Panc1 (cell line): ENCODE measurements at regions of chr1 and their contacts with region 1.

Region 1: GRCh38 chr1:27220096-27220495 is 14.3 kb upstream of the WDTC1 start:
- DNase-seq: no peak
- ATAC-seq: no peak
- H3K4me3 ChIP-seq: no peak overlapping the region
- H3K27ac ChIP-seq: no peak overlapping the region
- H3K4me1 ChIP-seq: no peaks in the 10 kb centered on the region
- H3K27me3 ChIP-seq: no peaks in the 10 kb centered on the region
- CTCF ChIP-seq: no peak

Region 2: DNA sequence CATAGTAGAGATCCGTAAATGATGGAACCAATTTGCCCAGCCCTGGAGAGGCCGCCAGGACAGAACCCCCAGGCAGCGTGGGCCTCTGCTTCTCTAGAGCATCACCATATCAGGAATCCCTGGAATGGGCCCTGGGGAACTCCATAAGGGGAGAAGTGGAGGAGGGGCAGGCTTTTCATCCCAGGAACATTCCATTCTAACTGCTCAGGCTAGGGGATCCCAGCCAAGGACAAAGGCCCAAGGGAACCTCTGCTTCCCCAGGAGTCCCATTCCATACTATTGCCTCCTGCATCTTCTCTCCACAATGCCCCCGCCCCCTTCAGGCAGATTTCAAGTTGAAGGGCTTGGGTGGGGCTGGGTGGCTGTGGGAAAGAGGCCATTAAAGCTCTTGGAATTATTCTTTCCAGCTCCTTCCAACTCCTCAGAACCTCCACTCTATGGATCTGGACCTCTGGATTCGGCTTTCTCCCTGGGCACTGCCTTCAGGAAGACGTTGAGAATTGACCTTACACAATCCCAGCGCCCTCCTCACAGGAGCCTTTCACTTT is 220.6 kb before region 1 on chr1:
- CTCF ChIA-PET with region 1: interaction called, 10 read pairs
- POLR2A ChIA-PET with region 1: no interaction called
- in situ Hi-C with region 1: no loop called
- intact Hi-C with region 1: no loop called
- DNase-seq: no peak
- ATAC-seq: peak; percentile 59
- H3K4me3 ChIP-seq: no peak overlapping the region
- H3K27ac ChIP-seq: peak overlapping the region; percentile 82
- H3K4me1 ChIP-seq: peaks cover 78% of the 10 kb centered on the region
- H3K27me3 ChIP-seq: no peaks in the 10 kb centered on the region
- CTCF ChIP-seq: no peak

Region 3: GRCh38 chr1:27145934-27146354 is 74.2 kb before region 1 on chr1:
- CTCF ChIA-PET with region 1: no interaction called
- POLR2A ChIA-PET with region 1: no interaction called
- in situ Hi-C with region 1: no loop called
- intact Hi-C with region 1: no loop called
- DNase-seq: no peak
- ATAC-seq: 0 out of 2 replicates have a peak, but pooled peaks have one; percentile 33
- H3K4me3 ChIP-seq: no peak overlapping the region
- H3K27ac ChIP-seq: 0 out of 2 replicates have a peak overlapping the region, but pooled peaks have one; percentile 58
- H3K4me1 ChIP-seq: peaks cover 36% of the 10 kb centered on the region
- H3K27me3 ChIP-seq: no peaks in the 10 kb centered on the region
- CTCF ChIP-seq: no peak